ENCODE measurements at regions of chr6 and their contacts with region 1.

Region 1: GRCh38 chr6:134182528-134182927 is 130.1 kb upstream of the SLC2A12 start:
- DNase-seq: no peak
- ATAC-seq: no peak

Region 2: DNA sequence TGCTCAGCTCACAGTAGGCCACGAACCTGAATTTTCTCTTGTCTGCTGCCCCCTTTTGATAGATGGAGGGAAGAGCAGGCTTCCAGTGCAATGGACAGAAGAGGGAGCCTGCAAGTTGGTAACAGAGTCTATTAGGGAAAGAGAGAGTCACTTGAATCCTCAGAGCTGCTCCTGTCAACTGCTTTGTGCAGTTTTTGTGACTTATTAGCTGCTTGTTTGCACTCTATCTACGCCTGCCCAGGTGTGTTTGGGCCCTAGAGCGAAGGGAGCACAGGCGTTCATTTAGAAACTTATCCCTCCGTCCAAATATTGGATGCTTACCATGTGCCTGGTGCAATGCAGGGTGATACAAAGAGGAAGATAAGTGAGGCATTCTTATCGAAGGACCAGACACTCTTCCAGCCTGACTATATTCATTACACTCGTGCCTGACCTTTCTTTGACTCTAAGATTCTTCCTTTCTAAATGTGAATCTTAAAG is 118.5 kb before region 1 on chr6:
- intact Hi-C with region 1: no loop called
- DNase-seq: no peak
- ATAC-seq: peak; percentile 90

Region 3: DNA sequence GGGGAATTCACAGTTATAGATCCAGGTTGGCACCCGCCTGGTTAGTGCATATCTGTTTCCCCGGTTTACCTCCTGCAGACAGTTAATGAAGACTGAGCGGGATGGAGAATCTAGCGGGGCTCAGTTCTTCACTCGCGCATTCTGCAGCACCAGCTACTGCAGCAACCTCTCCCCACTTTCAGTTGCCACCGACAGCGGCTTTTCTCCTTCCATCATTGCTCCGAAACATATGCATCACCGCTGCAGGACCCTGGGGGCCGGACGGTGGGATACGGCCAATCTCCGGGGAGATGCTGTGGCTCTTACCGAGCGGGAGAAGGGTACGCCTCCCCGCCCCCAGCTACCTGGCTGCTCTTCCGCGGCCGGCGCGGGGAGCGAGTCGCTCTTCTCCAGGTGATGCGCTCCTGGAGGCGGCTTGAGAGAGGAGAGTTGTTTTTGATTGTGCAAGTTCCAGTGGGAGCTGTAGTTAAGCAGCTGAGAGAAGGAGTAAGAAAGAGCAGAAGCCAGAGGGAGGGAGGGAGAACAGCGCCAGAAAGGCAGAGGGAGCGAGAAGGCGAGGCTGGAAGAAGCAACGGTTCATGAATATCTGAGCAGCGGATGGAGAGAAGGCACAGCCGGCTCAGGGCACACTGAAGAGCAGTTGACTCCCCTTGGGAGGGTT is 135.1 kb after region 1 on chr6 and contains the start of gene SGK1:
- intact Hi-C with region 1: loop called (anchors 10 kb)
- DNase-seq: no peak
- ATAC-seq: peak; percentile 79
- total RNA-seq, gene SGK1: 28.1 TPM

Region 4: GRCh38 chr6:134331256-134331655 is 148.7 kb after region 1 on chr6:
- intact Hi-C with region 1: no loop called
- DNase-seq: no peak
- ATAC-seq: no peak